ENCODE measurements at regions of chr6 and their contacts with region 1.

Region 1: GRCh38 chr6:110682460-110682853 is 132.8 kb downstream of the CDK19 start:
- DNase-seq: peak in 1 of 2 donors; percentile 47
- H3K4me3 ChIP-seq: no peak overlapping the region
- H3K27ac ChIP-seq: no peak overlapping the region
- H3K4me1 ChIP-seq: no peaks in the 10 kb centered on the region
- H3K27me3 ChIP-seq: no peaks in the 10 kb centered on the region
- CTCF ChIP-seq: peak; percentile 11 to 75 (median 71)
- POLR2A ChIP-seq: no peak

Region 2: GRCh38 chr6:110233770-110234374 is 448.6 kb before region 1 on chr6:
- intact Hi-C with region 1: loop called (anchors 10 kb)
- DNase-seq: no peak
- H3K4me3 ChIP-seq: no peak overlapping the region
- H3K27ac ChIP-seq: no peak overlapping the region
- H3K4me1 ChIP-seq: no peaks in the 10 kb centered on the region
- H3K27me3 ChIP-seq: no peaks in the 10 kb centered on the region
- CTCF ChIP-seq: no peak
- POLR2A ChIP-seq: no peak

Region 3: GRCh38 chr6:110628330-110628729 is 54.1 kb before region 1 on chr6:
- intact Hi-C with region 1: no loop called
- DNase-seq: no peak
- H3K4me3 ChIP-seq: no peak overlapping the region
- H3K27ac ChIP-seq: no peak overlapping the region
- H3K4me1 ChIP-seq: no peaks in the 10 kb centered on the region
- H3K27me3 ChIP-seq: no peaks in the 10 kb centered on the region
- CTCF ChIP-seq: no peak
- POLR2A ChIP-seq: no peak

Region 4: DNA sequence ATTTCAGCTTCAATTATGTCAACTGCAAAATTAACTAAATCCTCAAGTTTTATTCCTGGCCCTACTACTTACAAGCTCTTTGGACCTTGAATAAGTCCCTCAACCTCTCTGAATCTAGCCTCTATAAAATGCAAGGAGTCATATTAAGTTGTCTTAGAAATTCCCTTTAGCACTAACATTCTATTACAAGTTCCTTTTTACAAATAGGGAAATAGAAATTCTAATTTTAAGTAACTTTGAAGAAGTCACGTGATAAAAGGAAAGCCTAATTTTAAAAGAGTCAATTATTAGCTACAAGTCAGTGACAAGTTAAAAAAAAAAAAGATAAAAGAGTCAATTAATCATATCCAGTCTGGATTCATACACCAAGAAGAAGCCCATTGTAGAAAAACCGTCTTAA is 251.5 kb after region 1 on chr6:
- intact Hi-C with region 1: no loop called
- DNase-seq: no peak
- H3K4me3 ChIP-seq: no peak overlapping the region
- H3K27ac ChIP-seq: no peak overlapping the region
- H3K4me1 ChIP-seq: no peaks in the 10 kb centered on the region
- H3K27me3 ChIP-seq: no peaks in the 10 kb centered on the region
- CTCF ChIP-seq: no peak
- POLR2A ChIP-seq: no peak

Region 5: DNA sequence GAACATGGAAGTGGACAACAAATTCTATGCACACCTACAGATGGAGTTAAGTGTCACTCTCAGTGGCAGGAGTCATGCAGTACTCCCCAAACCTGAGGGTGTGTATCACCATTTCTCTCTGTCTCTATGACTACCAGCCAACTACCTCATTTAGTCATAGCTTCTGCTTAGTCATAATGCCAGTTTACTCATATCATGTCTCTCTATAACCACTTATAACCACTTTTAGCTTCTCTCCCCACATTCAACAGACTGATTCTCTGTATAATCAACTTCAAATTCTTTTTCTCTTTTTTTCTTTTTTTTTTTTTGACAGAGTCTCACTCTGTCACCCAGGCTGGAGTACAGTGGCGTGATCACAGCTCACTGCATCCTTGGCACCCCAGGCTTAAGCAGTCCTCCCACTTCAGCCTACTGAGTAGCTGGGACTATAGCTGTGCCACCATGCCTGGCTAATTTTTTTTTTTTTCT is 262.3 kb after region 1 on chr6:
- intact Hi-C with region 1: loop called (anchors 10 kb)
- DNase-seq: no peak
- H3K4me3 ChIP-seq: no peak overlapping the region
- H3K27ac ChIP-seq: no peak overlapping the region
- H3K4me1 ChIP-seq: no peaks in the 10 kb centered on the region
- H3K27me3 ChIP-seq: no peaks in the 10 kb centered on the region
- CTCF ChIP-seq: no peak
- POLR2A ChIP-seq: no peak

Region 6: GRCh38 chr6:112087136-112087911 is 1404.9 kb after region 1 on chr6 and contains the starts of genes FAM229B and TUBE1:
- intact Hi-C with region 1: no loop called
- DNase-seq: peak; percentile 85 to 90
- H3K4me3 ChIP-seq: peak within 1 kb of the TSS; percentile 79 to 89 (median 83)
- H3K27ac ChIP-seq: peak within 1 kb of the TSS; percentile 91 to 92
- H3K4me1 ChIP-seq: no peaks in the 10 kb centered on the region
- H3K27me3 ChIP-seq: no peaks in the 10 kb centered on the region
- CTCF ChIP-seq: no peak
- POLR2A ChIP-seq: peak; percentile 38
- total RNA-seq, gene FAM229B: 6.3 to 12.5 (median 10.9) TPM
- total RNA-seq, gene TUBE1: 27.7 to 72.4 (median 48.2) TPM